Body of pancreas (tissue), 4 donors: ENCODE measurements at regions of chr10 and their contacts with region 1.

Region 1: GRCh38 chr10:58177362-58177947 is 90.2 kb downstream of the IPMK start:
- DNase-seq: no peak
- ATAC-seq: peak; percentile 55
- H3K4me3 ChIP-seq: no peak overlapping the region
- H3K27ac ChIP-seq: no peak overlapping the region
- H3K4me1 ChIP-seq: no peaks in the 10 kb centered on the region
- H3K27me3 ChIP-seq: no peaks in the 10 kb centered on the region
- CTCF ChIP-seq: peak; percentile 21 to 83 (median 76)
- POLR2A ChIP-seq: no peak

Region 2: GRCh38 chr10:58291538-58292174 is 114.2 kb after region 1 on chr10:
- intact Hi-C with region 1: loop called (anchors 5 kb)
- DNase-seq: peak; percentile 18 to 57 (median 33)
- ATAC-seq: peak; percentile 75
- H3K4me3 ChIP-seq: no peak overlapping the region
- H3K27ac ChIP-seq: no peak overlapping the region
- H3K4me1 ChIP-seq: peaks cover 4% of the 10 kb centered on the region
- H3K27me3 ChIP-seq: no peaks in the 10 kb centered on the region
- CTCF ChIP-seq: peak; percentile 36 to 89 (median 80)
- POLR2A ChIP-seq: no peak

Region 3: GRCh38 chr10:58372607-58373441 is 195.4 kb after region 1 on chr10:
- intact Hi-C with region 1: no loop called
- DNase-seq: no peak
- ATAC-seq: no peak
- H3K4me3 ChIP-seq: no peak overlapping the region
- H3K27ac ChIP-seq: no peak overlapping the region
- H3K4me1 ChIP-seq: no peaks in the 10 kb centered on the region
- H3K27me3 ChIP-seq: no peaks in the 10 kb centered on the region
- CTCF ChIP-seq: no peak
- POLR2A ChIP-seq: no peak